Ascending aorta (tissue), 2 donors: ENCODE measurements at regions of chr9 and their contacts with region 1.

Region 1: DNA sequence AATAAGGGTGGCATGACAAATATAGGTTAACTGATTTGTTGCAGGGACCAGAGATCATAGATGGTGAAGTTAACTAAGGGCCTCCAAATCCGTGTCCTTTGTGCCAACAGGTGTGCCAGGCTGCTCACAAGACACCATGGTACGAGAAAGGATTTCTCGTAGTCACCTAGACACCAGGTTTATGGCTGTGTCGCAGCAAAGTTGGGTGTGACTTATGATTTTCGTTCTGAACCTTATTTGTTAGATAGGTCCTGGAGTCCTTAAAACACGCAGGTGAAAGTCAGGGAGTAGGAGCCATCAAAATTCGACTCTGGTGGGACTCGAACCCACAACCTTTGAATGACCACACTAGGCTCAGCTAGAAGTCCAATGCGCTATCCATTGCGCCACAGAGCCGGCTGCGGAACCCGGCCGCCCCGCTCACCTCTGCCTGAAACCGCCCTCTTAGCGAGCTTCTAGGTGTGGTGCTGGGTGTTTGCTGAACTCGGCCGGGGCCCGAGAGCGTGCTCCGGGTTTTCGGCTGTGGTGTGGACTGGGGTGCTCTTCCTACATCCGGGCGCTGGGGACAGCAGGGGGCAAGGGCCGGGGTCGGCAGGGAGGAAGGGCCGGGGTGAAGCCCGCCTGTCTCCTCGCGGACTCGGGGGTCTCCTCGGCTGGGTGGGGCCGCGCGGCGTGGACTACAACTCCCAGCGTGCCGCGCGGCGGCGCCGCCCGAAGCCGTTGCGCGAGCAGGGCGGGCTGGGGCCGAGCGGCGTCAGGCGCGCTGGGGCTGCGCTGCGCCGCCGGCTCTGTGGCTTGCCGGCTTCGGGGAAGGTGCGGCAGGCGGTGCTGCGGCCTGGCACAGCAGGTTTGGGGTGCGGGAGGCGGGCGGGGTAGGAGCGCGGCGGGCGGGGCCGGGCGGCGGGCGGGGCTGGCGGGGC is at the start of gene SLC27A4:
- DNase-seq: peak in 1 of 2 donors; percentile 79
- H3K4me3 ChIP-seq: peak within 1 kb of the TSS; percentile 83
- H3K27ac ChIP-seq: peak within 1 kb of the TSS; percentile 59 to 74
- H3K4me1 ChIP-seq: peaks cover 0 to 6% of the 10 kb centered on the region in 2 donors
- H3K27me3 ChIP-seq: no peaks in the 10 kb centered on the region
- CTCF ChIP-seq: no peak
- total RNA-seq, gene SLC27A4: 16.6 TPM

Region 2: DNA sequence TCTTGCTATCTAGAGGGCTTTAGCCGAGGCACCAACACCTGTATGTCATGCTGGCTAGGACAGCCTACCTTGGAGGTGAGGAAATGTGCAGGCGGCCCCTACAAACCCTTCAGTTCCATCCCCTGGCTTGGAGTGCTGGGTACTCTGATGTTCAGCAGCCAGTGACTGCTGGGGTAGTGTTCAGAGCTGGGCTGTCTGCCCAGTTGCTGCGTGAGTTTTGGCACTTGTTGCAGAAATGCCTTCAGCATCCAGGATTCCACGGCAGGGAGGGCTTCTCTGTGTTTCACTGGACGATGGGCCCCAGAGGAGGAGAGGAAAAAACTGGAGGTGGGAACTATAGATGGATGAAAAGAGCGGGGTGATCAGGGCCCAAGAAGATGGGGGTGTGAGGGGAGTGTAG is 53.6 kb before region 1 on chr9:
- intact Hi-C with region 1: no loop called
- DNase-seq: no peak
- H3K4me3 ChIP-seq: no peak overlapping the region
- H3K27ac ChIP-seq: no peak overlapping the region
- H3K4me1 ChIP-seq: no peaks in the 10 kb centered on the region
- H3K27me3 ChIP-seq: no peaks in the 10 kb centered on the region
- CTCF ChIP-seq: no peak

Region 3: GRCh38 chr9:128296337-128297220 is 43.5 kb before region 1 on chr9:
- intact Hi-C with region 1: loop called (anchors 1 kb)
- DNase-seq: no peak
- H3K4me3 ChIP-seq: no peak overlapping the region
- H3K27ac ChIP-seq: no peak overlapping the region
- H3K4me1 ChIP-seq: no peaks in the 10 kb centered on the region
- H3K27me3 ChIP-seq: no peaks in the 10 kb centered on the region
- CTCF ChIP-seq: no peak

Region 4: GRCh38 chr9:128322404-128323211 is 17.4 kb before region 1 on chr9 and contains the starts of genes COQ4 and TRUB2:
- intact Hi-C with region 1: loop called (anchors 1 kb)
- DNase-seq: peak; percentile 72 to 97
- H3K4me3 ChIP-seq: peak within 1 kb of the TSS; percentile 72 to 76
- H3K27ac ChIP-seq: peak within 1 kb of the TSS; percentile 82 to 85
- H3K4me1 ChIP-seq: peaks cover 11 to 17% of the 10 kb centered on the region in 2 donors
- H3K27me3 ChIP-seq: no peaks in the 10 kb centered on the region
- CTCF ChIP-seq: no peak
- total RNA-seq, gene COQ4: 11.4 TPM
- total RNA-seq, gene TRUB2: 10.2 TPM